ENCODE measurements at regions of chr5 and their contacts with region 1.

Region 1: DNA sequence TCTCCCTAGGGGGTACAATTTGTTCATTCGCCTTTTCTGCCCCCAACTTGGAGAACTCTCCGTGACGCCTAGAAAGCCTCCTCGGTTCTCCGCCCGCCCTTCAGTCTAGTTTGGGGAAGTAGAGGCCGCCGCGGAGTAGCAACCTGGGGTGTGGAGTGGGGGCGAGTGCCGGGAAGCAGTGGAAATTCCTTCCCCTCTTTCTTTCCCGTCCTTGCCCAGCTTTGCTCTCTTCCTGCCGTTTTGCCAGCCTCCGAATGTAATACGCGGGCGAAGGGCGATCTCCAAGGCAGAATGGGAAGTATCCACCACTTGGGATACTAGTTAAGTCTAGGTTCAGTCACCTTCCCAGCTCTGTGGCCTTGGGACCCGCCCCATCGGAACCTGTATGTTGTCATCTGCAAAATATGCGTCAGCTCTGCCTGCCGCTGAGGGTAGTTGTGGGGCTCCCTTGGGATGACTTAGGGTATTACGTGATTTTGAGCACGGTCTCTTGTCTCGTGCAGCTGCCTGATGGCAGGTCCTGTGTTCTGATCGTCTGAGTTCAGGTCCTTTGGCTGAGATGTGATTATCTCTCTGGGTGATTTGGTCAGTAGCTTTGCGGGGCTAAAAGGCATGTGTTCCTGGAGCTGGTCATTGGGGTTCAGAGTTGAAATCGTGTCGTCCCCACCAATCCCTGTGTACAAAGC is 724 bp downstream of the PAM start:
- DNase-seq: peak; percentile 87
- H3K4me3 Mint-ChIP-seq: peak overlapping the region; percentile 91
- H3K27ac Mint-ChIP-seq: peak overlapping the region; percentile 93
- H3K4me1 Mint-ChIP-seq: peaks cover 40% of the 10 kb centered on the region
- H3K27me3 Mint-ChIP-seq: peaks cover 7% of the 10 kb centered on the region

Region 2: GRCh38 chr5:102740515-102740914 is 15.3 kb before region 1 on chr5:
- CTCF ChIA-PET with region 1: no interaction called
- POLR2A ChIA-PET with region 1: no interaction called
- intact Hi-C with region 1: no loop called
- DNase-seq: no peak
- H3K4me3 Mint-ChIP-seq: no peak overlapping the region
- H3K27ac Mint-ChIP-seq: no peak overlapping the region
- H3K4me1 Mint-ChIP-seq: no peaks in the 10 kb centered on the region
- H3K27me3 Mint-ChIP-seq: peaks cover 5% of the 10 kb centered on the region

Region 3: DNA sequence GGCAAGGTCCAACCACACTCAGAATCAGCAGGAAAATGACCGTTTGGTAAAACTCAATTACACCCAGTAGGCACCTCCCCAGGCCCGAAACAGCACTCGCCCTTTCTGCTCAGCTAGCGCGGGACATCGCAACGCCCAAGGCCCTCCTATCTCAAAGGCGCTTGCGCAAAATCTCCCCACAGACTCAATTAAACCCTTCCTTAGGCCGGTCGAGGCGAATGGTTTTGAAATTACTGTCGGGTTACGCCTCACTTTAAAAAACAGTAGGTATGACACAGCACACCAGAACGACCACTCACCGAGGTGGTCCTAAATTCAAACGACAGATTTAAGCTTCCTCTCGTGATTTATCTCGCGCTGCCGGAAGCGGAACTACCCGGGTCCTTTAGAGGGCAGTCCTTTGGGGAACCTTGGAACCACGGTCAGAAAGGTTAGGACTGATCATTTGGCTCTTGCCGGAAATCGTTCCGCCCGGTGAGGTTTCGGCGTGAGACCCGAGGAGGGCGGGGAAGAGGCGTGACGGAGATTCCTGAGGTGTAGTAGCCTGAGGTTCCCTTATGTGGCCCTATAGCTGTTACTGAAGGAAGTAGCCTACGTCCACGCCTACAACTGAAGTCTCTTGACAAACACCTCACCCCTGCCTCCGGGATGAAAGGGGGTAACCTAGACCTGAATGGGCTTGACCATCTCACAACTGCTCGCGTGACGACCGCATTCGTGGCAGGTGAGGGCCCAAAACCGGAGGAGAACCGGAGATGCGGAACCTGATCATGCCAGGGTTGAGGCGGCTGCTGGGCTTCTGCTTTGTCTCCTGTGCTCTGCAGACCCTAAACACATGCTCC is 364.2 kb after region 1 on chr5 and contains the starts of genes GIN1 and PPIP5K2:
- CTCF ChIA-PET with region 1: no interaction called
- POLR2A ChIA-PET with region 1: interaction called, 26 read pairs
- intact Hi-C with region 1: no loop called
- DNase-seq: peak; percentile 99
- H3K4me3 Mint-ChIP-seq: peak within 1 kb of the TSS; percentile 88
- H3K27ac Mint-ChIP-seq: peak within 1 kb of the TSS; percentile 99
- H3K4me1 Mint-ChIP-seq: peaks cover 40% of the 10 kb centered on the region
- H3K27me3 Mint-ChIP-seq: no peaks in the 10 kb centered on the region
- total RNA-seq, gene GIN1: 9.7 to 10.7 TPM
- total RNA-seq, gene PPIP5K2: 40.6 to 44.4 TPM

Region 4: DNA sequence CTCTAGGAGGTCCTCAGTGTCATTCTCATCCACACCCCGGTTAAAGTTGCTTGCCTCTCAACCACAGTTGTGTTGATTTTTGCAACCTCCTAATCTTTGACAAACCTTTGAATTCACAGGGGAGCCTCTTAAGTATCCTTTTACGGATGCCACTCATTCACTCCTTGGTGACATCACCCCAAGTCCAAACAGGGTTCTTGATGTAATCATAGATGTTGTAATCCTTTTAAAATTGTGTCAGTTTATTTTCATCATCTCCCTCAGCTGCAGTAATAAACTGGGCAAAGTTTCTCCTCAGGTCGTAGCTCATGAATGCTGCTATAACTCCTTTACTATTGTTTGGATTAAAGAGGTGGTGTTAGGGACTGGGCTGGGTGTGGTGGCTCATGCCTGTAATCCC is 1443.9 kb after region 1 on chr5:
- CTCF ChIA-PET with region 1: no interaction called
- POLR2A ChIA-PET with region 1: no interaction called
- intact Hi-C with region 1: no loop called
- DNase-seq: no peak
- H3K4me3 Mint-ChIP-seq: no peak overlapping the region
- H3K27ac Mint-ChIP-seq: no peak overlapping the region
- H3K4me1 Mint-ChIP-seq: no peaks in the 10 kb centered on the region
- H3K27me3 Mint-ChIP-seq: no peaks in the 10 kb centered on the region